Activated CD4-positive, alpha-beta T cell treated with anti-CD3 and anti-CD28 coated beads for 36 hours (primary cell): ENCODE measurements at regions of chr9 and their contacts with region 1.

Region 1: DNA sequence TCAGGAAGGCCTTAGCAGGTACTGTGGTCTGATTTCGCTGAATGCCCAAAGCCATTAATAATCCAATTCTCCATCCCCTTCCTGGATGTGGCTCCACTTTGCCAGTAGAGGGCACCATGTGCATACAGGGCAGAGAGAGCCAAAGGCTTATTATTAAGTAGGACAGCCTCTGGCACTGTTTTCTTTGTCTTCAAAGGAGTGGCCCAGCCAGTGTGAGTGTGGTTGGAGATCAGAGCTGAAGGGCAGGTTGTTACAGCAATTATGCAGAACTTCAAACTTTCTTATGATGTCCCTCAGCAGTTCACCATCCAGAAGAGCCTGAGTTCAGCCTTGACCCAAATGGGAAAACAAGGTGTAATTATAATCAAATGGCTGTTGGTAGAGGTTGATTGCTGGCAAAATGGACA is 38.6 kb upstream of the CEMIP2 start:
- DNase-seq: peak; percentile 74
- ATAC-seq: peak; percentile 97
- H3K4me3 Mint-ChIP-seq: no peak overlapping the region
- H3K27ac Mint-ChIP-seq: no peak overlapping the region
- H3K4me1 Mint-ChIP-seq: peaks cover 8% of the 10 kb centered on the region
- H3K27me3 Mint-ChIP-seq: no peaks in the 10 kb centered on the region

Region 2: DNA sequence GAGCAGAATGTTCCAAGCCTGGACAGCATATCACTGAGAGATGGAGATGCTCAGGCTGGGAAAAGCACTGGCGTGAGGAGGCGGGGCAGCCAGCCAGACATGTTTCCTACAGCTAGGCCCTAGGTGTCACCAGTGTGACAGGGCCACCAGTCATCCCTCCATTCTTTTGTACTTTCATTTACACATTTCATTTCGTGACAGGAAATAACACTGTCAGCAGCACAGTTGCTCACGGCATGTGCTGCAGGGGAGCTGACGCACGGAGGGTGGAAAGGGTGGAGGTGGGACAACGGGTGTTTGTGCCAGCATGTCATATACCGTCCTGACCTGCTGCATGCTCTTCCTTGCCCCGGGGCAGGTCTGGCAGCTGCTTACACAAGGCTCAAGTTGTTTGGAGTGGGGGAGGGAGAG is 23.8 kb before region 1 on chr9:
- CTCF ChIA-PET with region 1: interaction called, 14 read pairs
- POLR2A ChIA-PET with region 1: no interaction called
- intact Hi-C with region 1: no loop called
- DNase-seq: peak; percentile 93
- ATAC-seq: peak; percentile 97
- H3K4me3 Mint-ChIP-seq: peak overlapping the region; percentile 68
- H3K27ac Mint-ChIP-seq: peak overlapping the region; percentile 98
- H3K4me1 Mint-ChIP-seq: peaks cover 48% of the 10 kb centered on the region
- H3K27me3 Mint-ChIP-seq: no peaks in the 10 kb centered on the region

Region 3: DNA sequence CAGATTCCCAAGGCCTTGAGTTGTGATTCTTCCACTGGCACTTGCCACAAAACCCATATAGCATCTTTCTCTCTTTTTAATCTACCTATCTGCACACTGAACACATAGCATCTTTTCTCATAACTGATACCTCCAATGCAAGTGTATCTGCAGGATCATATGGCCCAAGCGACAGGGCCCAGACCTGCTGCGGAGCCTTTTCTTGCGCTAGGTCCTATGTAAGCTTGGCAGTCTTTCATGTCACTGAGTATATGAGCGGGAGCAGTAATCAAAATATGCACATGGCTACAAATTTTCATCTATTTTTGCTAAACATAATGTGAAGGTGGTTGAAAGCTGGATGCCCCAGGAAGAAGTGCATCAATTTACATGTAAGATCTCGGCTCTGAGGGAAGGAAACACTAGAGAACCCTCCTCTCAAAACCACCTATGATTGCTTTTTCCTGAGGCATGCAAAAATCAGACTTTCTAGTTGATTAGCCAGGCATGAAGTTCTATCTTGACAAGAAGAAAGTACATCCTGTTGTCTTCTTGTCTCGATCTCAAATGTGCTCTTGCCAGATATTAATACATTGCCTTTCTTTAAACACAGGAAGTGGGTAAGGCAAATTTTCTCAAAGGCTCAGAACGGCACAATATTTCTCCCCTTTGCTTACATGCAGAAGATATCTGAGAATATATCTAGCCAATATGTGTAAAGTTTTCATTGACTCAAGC is 11.6 kb before region 1 on chr9:
- CTCF ChIA-PET with region 1: interaction called, 25 read pairs
- POLR2A ChIA-PET with region 1: no interaction called
- intact Hi-C with region 1: no loop called
- DNase-seq: peak; percentile 20
- ATAC-seq: peak; percentile 68
- H3K4me3 Mint-ChIP-seq: peak overlapping the region; percentile 34
- H3K27ac Mint-ChIP-seq: peak overlapping the region; percentile 84
- H3K4me1 Mint-ChIP-seq: peaks cover 60% of the 10 kb centered on the region
- H3K27me3 Mint-ChIP-seq: no peaks in the 10 kb centered on the region

Region 4: DNA sequence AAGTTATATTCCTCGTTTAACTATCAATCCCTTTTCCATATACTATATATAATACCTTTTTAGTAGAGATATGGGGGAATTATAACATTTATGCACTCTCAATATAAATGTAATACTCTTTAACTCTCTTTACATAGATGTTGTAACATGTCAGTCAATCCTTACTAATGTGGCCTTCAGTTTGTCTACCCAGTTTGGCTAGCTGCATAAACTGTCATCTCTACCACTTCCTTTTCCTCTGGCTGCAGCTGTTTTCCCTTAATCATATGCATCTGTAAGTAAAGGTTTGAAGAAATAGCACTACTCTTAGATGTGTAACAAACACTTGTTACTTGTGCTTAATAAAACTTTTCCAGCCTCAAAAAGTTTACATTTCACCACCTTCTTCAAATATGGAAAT is 90.7 kb after region 1 on chr9:
- CTCF ChIA-PET with region 1: interaction called, 3 read pairs
- POLR2A ChIA-PET with region 1: no interaction called
- intact Hi-C with region 1: loop called in 1 of 2 experiments (anchors 5 kb)
- DNase-seq: no peak
- ATAC-seq: peak; percentile 69
- H3K4me3 Mint-ChIP-seq: no peak overlapping the region
- H3K27ac Mint-ChIP-seq: no peak overlapping the region
- H3K4me1 Mint-ChIP-seq: peaks cover 75% of the 10 kb centered on the region
- H3K27me3 Mint-ChIP-seq: no peaks in the 10 kb centered on the region

Region 5: DNA sequence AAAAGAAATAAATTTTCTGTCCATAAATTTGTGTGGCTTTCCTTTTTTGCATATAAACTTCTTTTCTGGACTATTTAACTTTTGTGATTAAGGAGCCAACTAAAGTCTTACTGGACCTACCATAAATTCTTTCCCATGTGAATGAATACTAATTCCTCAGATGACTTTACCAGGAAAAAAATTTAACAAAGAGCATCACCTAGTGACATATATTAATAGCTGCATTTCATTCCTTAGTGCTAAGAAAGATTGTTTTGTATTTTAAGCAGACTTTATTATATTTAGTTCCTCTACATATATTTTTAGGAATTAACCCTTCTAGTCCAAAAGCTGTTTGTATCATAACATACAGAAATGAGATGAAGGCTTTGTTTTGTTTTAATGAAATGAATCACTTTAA is 168.9 kb after region 1 on chr9:
- CTCF ChIA-PET with region 1: interaction called, 3 read pairs
- POLR2A ChIA-PET with region 1: no interaction called
- intact Hi-C with region 1: loop called in 1 of 2 experiments (anchors 2 kb)
- DNase-seq: no peak
- ATAC-seq: no peak
- H3K4me3 Mint-ChIP-seq: no peak overlapping the region
- H3K27ac Mint-ChIP-seq: no peak overlapping the region
- H3K4me1 Mint-ChIP-seq: no peaks in the 10 kb centered on the region
- H3K27me3 Mint-ChIP-seq: no peaks in the 10 kb centered on the region

Region 6: GRCh38 chr9:72022841-72023240 is 215.9 kb after region 1 on chr9:
- CTCF ChIA-PET with region 1: interaction called, 109 read pairs
- POLR2A ChIA-PET with region 1: no interaction called
- intact Hi-C with region 1: loop called (anchors 1 kb)
- DNase-seq: no peak
- ATAC-seq: no peak
- H3K4me3 Mint-ChIP-seq: no peak overlapping the region
- H3K27ac Mint-ChIP-seq: no peak overlapping the region
- H3K4me1 Mint-ChIP-seq: no peaks in the 10 kb centered on the region
- H3K27me3 Mint-ChIP-seq: no peaks in the 10 kb centered on the region

Region 7: GRCh38 chr9:72271613-72272478 is 464.9 kb after region 1 on chr9:
- CTCF ChIA-PET with region 1: interaction called, 4 read pairs
- POLR2A ChIA-PET with region 1: no interaction called
- intact Hi-C with region 1: loop called (anchors 1 to 5 kb)
- DNase-seq: peak; percentile 66
- ATAC-seq: no peak
- H3K4me3 Mint-ChIP-seq: no peak overlapping the region
- H3K27ac Mint-ChIP-seq: no peak overlapping the region
- H3K4me1 Mint-ChIP-seq: no peaks in the 10 kb centered on the region
- H3K27me3 Mint-ChIP-seq: no peaks in the 10 kb centered on the region